ENCODE measurements at regions of chrX and their contacts with region 1.

Region 1: DNA sequence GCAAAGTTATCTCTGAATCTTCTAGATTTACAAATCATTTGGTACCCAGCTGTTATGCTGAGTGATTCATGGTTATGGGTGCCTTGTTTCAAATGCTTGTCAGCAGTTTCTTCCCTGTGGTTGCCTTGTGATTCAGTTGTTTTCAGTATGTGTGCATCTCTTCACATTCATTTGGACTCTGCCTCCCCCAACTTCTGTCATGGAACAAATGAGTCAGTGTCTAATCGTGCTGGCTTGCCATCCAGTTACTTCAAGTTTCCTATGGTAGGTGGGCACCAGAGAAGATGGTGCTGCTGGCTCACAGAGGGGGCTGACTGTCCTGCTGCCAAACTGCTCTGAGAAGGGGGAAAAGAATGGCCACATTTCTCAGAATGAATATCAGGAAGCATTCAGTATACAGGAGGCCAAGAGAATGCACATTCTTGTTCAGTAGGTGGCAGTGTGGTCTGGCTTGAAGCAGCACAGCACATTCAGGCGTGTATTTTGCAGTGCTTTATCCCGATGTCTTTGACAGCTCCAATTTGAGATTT is 260.9 kb downstream of the GLUD2 start:
- DNase-seq: peak; percentile 36
- H3K4me3 Mint-ChIP-seq: no peak overlapping the region
- H3K27ac Mint-ChIP-seq: no peak overlapping the region
- H3K4me1 Mint-ChIP-seq: no peaks in the 10 kb centered on the region
- H3K27me3 Mint-ChIP-seq: no peaks in the 10 kb centered on the region
- CTCF ChIP-seq: peak; percentile 42

Region 2: GRCh38 chrX:120790118-120790517 is 518.2 kb before region 1 on chrX:
- CTCF ChIA-PET with region 1: no interaction called
- intact Hi-C with region 1: loop called (anchors 5 kb)
- DNase-seq: peak; percentile 16
- H3K4me3 Mint-ChIP-seq: no peak overlapping the region
- H3K27ac Mint-ChIP-seq: no peak overlapping the region
- H3K4me1 Mint-ChIP-seq: peaks cover 22% of the 10 kb centered on the region
- H3K27me3 Mint-ChIP-seq: no peaks in the 10 kb centered on the region
- CTCF ChIP-seq: peak; percentile 18

Region 3: GRCh38 chrX:121479406-121479805 is 171.1 kb after region 1 on chrX:
- CTCF ChIA-PET with region 1: no interaction called
- intact Hi-C with region 1: loop called (anchors 2 kb)
- DNase-seq: no peak
- H3K4me3 Mint-ChIP-seq: no peak overlapping the region
- H3K27ac Mint-ChIP-seq: peak overlapping the region; percentile 16
- H3K4me1 Mint-ChIP-seq: no peaks in the 10 kb centered on the region
- H3K27me3 Mint-ChIP-seq: no peaks in the 10 kb centered on the region
- CTCF ChIP-seq: no peak

Region 4: GRCh38 chrX:121579016-121579760 is 270.8 kb after region 1 on chrX:
- CTCF ChIA-PET with region 1: no interaction called
- intact Hi-C with region 1: loop called (anchors 2 kb)
- DNase-seq: peak; percentile 49
- H3K4me3 Mint-ChIP-seq: no peak overlapping the region
- H3K27ac Mint-ChIP-seq: no peak overlapping the region
- H3K4me1 Mint-ChIP-seq: no peaks in the 10 kb centered on the region
- H3K27me3 Mint-ChIP-seq: no peaks in the 10 kb centered on the region
- CTCF ChIP-seq: no peak

Measured in Calu3 (cell line).